ENCODE measurements at regions of chr11 and their contacts with region 1.

Region 1: DNA sequence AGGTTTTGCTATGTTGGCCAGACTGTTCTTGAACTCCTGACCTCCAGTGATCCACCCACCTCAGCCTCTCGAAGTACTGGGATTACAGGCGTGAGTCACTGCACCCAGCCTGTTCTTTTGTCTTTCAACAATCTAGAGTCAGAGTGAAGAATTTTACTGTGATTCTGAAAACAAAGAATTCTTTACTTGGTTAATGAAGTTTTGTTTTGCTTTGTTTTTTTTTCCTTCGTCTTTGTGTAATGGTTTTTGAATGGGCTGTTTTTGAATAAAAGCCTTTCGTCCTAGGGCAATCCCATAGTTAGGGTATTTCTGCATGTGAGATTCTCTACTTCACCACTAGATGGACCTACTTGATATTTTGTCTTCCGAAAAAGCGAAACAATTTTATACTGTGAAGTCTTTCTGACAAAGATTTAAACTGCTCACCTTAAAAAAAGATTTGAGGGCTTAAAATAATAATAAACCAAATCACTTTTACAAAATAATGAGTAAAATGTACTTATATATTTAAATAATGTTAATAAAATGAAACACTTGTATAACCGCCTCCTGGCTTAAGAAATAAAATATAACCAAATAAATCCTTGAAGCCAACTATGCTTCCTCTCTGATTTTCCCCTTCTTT is 43.4 kb upstream of the SC5D start:
- DNase-seq: peak in 6 of 9 donors; percentile 36 to 56 (median 41)
- ATAC-seq: peak; percentile 75
- H3K4me3 ChIP-seq: no peak overlapping the region
- H3K4me3 Mint-ChIP-seq: peak overlapping the region in 1 of 10 donors; percentile 19
- H3K27ac ChIP-seq: no peak overlapping the region
- H3K27ac Mint-ChIP-seq: peak overlapping the region in 1 of 9 donors; percentile 23
- H3K4me1 ChIP-seq: no peaks in the 10 kb centered on the region
- H3K4me1 Mint-ChIP-seq: peaks cover 0 to 10% (median 3%) of the 10 kb centered on the region in 7 donors
- H3K27me3 ChIP-seq: no peaks in the 10 kb centered on the region
- H3K27me3 Mint-ChIP-seq: peaks cover 0 to 12% (median 5%) of the 10 kb centered on the region in 5 donors

Region 2: GRCh38 chr11:121132196-121132976 is 116.8 kb before region 1 on chr11:
- CTCF ChIA-PET with region 1: no interaction called
- POLR2A ChIA-PET with region 1: no interaction called
- intact Hi-C with region 1: no loop called
- DNase-seq: no peak
- ATAC-seq: no peak
- H3K4me3 ChIP-seq: no peak overlapping the region
- H3K4me3 Mint-ChIP-seq: no peak overlapping the region
- H3K27ac ChIP-seq: no peak overlapping the region
- H3K27ac Mint-ChIP-seq: no peak overlapping the region
- H3K4me1 ChIP-seq: no peaks in the 10 kb centered on the region
- H3K4me1 Mint-ChIP-seq: no peaks in the 10 kb centered on the region
- H3K27me3 ChIP-seq: no peaks in the 10 kb centered on the region
- H3K27me3 Mint-ChIP-seq: peaks cover 0 to 10% (median 0%) of the 10 kb centered on the region in 5 donors

Region 3: DNA sequence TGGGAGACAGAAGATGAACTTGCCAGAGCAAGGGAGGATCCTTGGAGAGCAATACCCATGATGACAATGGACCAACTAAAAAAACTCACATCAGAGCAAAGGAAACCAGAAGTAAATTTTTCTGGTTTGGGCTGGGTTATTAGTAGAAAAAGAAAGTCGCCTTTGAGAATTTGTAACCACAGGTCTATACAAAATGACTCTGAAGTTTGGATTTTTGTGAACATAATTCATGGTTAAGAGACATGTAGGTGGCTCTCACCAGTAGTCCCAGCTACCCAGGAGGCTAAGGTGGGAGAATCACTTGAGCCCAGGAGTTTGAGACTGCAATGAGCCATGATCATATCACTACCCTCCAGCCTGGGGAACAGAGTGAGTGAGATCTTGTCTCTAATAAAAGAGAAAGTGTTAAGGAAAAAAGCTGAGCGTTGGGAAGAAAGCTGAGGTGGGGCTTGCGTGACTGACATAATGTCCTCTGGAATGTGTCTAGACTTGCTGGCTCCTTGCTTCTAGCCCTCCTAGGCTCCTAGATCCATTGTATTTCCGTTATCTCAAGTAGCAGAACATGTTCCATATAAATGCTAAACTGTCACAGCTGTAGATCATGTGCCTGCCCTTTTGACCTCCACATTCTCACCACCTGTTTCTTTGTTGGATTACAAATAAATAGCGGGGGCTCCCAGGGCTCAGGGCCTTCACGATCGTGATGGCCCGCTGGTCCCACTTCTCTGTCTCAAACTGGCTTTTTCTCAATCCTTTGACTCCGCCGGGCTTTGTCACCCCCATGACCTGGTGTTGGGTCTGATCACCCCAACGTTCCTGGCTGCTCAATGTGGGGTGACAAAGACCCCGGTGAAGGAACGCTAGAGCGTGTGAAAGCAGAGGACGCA is 12.8 kb before region 1 on chr11:
- CTCF ChIA-PET with region 1: no interaction called
- POLR2A ChIA-PET with region 1: no interaction called
- intact Hi-C with region 1: no loop called
- DNase-seq: no peak
- ATAC-seq: no peak
- H3K4me3 ChIP-seq: no peak overlapping the region
- H3K4me3 Mint-ChIP-seq: peak overlapping the region in 1 of 10 donors; percentile 37
- H3K27ac ChIP-seq: no peak overlapping the region
- H3K27ac Mint-ChIP-seq: no peak overlapping the region
- H3K4me1 ChIP-seq: no peaks in the 10 kb centered on the region
- H3K4me1 Mint-ChIP-seq: peaks cover 0 to 24% (median 0%) of the 10 kb centered on the region in 7 donors
- H3K27me3 ChIP-seq: no peaks in the 10 kb centered on the region
- H3K27me3 Mint-ChIP-seq: peaks cover 11 to 38% (median 30%) of the 10 kb centered on the region in 5 donors

Region 4: GRCh38 chr11:121482231-121483129 is 233.3 kb after region 1 on chr11:
- CTCF ChIA-PET with region 1: no interaction called
- POLR2A ChIA-PET with region 1: no interaction called
- intact Hi-C with region 1: loop called in 1 of 2 experiments (anchors 1 kb)
- DNase-seq: peak in 8 of 9 donors; percentile 45 to 72 (median 67)
- ATAC-seq: peak; percentile 87
- H3K4me3 ChIP-seq: peak overlapping the region; percentile 30
- H3K4me3 Mint-ChIP-seq: peak overlapping the region; percentile 73 to 89 (median 86)
- H3K27ac ChIP-seq: peak overlapping the region; percentile 61
- H3K27ac Mint-ChIP-seq: peak overlapping the region; percentile 84 to 97 (median 94)
- H3K4me1 ChIP-seq: peaks cover 25 to 44% of the 10 kb centered on the region in 2 donors
- H3K4me1 Mint-ChIP-seq: peaks cover 50 to 90% (median 81%) of the 10 kb centered on the region in 7 donors
- H3K27me3 ChIP-seq: no peaks in the 10 kb centered on the region
- H3K27me3 Mint-ChIP-seq: no peaks in the 10 kb centered on the region

Region 5: DNA sequence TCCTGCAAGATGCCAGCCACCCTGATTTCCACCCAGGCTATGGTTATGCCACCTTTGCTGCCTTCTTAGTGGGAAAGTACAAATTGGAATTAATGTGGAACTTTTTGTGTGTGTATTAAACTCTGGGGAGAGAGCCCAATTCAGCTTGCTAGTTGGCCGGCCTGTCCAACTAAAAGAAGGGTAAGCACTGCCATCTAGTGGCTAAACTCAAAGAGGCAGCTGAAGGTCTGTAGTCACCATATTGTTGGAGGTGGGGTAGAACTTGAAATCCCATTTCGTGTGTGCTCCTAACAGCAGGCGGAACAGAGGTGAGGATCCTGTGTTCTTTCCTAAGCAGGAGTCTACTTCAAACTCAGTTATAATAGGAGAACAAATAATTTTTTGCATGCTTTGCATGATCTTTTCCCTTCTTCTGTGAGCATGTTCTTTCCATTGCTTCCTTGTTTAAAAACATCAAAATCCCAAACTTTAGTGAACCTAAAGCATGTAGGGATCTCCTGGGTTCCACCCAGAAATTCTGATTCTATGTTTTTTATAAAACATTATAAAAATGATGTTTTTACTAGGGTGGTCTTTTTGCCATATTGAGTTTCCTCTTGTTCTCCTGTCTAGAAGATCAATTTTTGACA is 342.4 kb after region 1 on chr11:
- CTCF ChIA-PET with region 1: interaction called, 6 read pairs
- POLR2A ChIA-PET with region 1: no interaction called
- intact Hi-C with region 1: loop called (anchors 1 kb)
- DNase-seq: peak in 8 of 9 donors; percentile 56 to 81 (median 74)
- ATAC-seq: peak; percentile 88
- H3K4me3 ChIP-seq: no peak overlapping the region
- H3K4me3 Mint-ChIP-seq: no peak overlapping the region
- H3K27ac ChIP-seq: no peak overlapping the region
- H3K27ac Mint-ChIP-seq: peak overlapping the region in 7 of 9 donors; percentile 44 to 89 (median 70)
- H3K4me1 ChIP-seq: no peaks in the 10 kb centered on the region
- H3K4me1 Mint-ChIP-seq: peaks cover 9 to 29% (median 14%) of the 10 kb centered on the region in 7 donors
- H3K27me3 ChIP-seq: no peaks in the 10 kb centered on the region
- H3K27me3 Mint-ChIP-seq: no peaks in the 10 kb centered on the region

Region 6: GRCh38 chr11:121613724-121614123 is 364.6 kb after region 1 on chr11:
- CTCF ChIA-PET with region 1: no interaction called
- POLR2A ChIA-PET with region 1: no interaction called
- intact Hi-C with region 1: no loop called
- DNase-seq: no peak
- ATAC-seq: no peak
- H3K4me3 ChIP-seq: no peak overlapping the region
- H3K4me3 Mint-ChIP-seq: no peak overlapping the region
- H3K27ac ChIP-seq: no peak overlapping the region
- H3K27ac Mint-ChIP-seq: peak overlapping the region in 1 of 9 donors; percentile 56
- H3K4me1 ChIP-seq: no peaks in the 10 kb centered on the region
- H3K4me1 Mint-ChIP-seq: peaks cover 0 to 2% (median 0%) of the 10 kb centered on the region in 7 donors
- H3K27me3 ChIP-seq: no peaks in the 10 kb centered on the region
- H3K27me3 Mint-ChIP-seq: no peaks in the 10 kb centered on the region

Measured in naive thymus-derived CD4-positive, alpha-beta T cell (primary cell).